ENCODE measurements at regions of chr4 and their contacts with region 1.

Region 1: DNA sequence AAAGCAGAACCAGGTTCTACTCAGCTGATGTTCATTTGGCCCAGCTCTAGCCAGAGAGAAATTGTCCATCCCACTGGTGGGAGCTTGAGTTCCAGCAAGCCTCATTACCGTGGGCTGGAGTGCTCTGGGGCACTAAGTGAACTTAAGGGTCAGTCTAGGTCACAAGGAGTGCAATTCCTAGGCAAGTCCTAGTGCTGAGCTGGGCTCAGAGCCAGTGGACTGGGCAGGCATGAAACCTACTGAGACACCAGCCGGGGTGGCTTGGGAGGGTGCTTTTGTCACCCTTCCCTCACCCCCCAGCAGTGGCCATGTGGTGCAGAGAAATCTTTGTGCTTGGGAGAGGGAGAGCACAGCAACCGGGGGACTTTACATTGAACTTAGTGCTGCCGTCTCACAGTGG is 39.4 kb downstream of the GSX2 start:
- DNase-seq: no peak
- H3K27ac ChIP-seq: no peak overlapping the region
- CTCF ChIP-seq: no peak

Region 2: DNA sequence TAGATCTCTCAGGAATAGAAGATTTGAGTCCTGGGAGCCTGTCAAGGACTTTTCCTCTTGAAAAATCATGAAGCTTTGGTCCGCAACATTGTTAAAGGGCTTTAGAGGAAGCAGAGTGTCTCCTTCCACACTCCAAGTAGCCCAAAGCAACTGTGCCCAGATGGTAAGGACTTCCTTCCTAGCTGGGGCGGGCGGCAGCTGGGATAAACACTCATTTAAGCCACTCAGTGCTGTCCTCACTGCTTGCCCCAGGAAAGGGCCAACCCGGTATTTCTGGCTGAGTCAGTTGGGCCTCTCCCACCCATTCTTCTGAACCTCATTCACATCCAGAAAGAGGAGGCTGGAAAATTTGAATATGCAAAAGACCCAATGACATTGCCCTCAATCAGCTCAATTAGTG is 219.2 kb before region 1 on chr4:
- CTCF ChIA-PET with region 1: interaction called, 11 read pairs
- POLR2A ChIA-PET with region 1: no interaction called
- DNase-seq: no peak
- H3K27ac ChIP-seq: no peak overlapping the region
- CTCF ChIP-seq: no peak

Measured in RWPE1 (cell line).